ENCODE measurements at regions of chr11 and their contacts with region 1.

Region 1: DNA sequence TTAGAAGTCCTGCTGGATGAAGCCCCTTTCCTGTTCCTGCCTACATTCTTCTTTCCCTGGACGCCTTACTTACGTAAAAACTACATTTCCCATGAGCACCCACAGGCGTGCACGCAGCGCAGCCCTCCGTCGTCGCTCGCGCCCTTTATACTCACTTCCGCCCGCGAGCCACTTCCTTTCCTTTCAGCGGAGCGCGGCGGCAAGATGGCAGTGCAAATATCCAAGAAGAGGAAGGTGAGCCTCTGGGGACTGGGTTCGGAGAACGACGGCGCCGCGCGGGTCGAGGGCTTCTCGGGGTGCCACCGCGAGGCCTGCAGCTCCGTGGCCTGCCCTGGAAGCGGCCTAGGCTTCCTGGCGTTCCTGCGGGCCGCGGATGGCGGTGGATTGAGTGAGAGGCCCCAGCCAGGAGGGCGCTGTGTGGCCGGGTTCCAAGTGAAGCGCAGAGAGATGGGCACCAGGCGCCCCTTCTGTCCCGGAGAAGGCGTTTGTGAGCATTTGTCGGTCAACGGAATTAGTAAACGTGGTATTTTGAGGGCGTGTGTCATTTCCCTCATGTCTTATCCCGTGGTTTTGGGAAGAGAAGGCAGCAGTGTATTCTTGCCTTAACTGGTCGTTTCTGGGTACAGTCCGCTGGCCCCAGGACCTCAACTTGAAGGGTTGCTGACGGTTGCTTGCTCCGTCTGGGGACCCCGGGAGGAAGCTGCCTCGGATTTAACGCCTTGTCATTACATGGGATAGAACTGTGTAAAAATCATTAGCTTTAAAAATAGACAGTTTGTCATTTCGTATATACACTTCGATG is at the start of gene RPS3:
- ATAC-seq: peak; percentile 84 to 99 (median 97)
- H3K4me3 ChIP-seq: peak within 1 kb of the TSS; percentile 50 to 98 (median 90)
- H3K27ac ChIP-seq: peak within 1 kb of the TSS; percentile 87 to 96
- H3K4me1 ChIP-seq: peaks cover 16 to 20% of the 10 kb centered on the region in 2 donors
- total RNA-seq, gene RPS3: 1,093 to 3,288 (median 2,247) TPM

Region 2: DNA sequence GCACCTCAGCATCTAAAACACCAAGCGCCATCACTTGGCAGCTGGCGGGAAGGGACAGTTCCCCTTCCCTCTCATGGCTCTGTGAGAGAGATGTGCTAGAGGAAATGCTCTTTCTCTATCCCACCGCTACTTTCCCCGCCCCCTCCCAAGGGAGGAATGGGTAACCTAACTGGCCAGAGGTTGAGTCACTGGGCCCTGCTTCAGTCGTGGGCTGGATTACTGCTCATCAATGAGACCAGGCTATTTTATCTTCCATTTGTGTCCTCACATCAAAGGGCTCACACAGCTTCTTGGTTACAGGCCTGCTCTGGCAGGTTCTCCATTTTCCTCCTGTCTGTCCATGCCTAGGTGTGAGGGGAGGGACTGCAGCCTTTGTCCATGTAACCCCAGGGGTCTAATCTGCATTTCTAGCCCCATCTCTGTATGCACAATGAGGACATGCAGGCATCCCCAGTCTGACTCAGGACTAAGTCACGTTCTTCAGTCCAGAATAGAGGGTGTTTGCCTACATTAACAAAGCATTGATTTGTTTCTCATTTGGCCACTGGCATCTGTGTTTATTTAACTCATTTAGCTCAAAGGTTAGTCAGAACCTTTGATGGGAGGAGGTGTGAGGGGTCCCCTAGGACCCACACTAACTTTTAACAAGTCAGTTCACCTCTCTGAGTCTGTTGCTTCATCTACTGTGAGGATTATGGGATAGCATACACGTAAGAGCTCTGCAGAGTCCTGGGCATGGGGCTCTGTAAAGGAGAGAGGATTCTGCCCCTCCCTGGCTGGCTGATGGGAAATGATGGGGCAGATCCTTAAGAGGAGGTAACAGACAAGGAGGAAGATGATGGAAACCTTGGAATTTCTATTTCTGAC is 549.8 kb before region 1 on chr11:
- in situ Hi-C with region 1: no loop called
- ATAC-seq: peak in 7 of 8 experiments; percentile 36 to 94 (median 77)
- H3K4me3 ChIP-seq: no peak overlapping the region
- H3K27ac ChIP-seq: no peak overlapping the region
- H3K4me1 ChIP-seq: no peaks in the 10 kb centered on the region

Region 3: GRCh38 chr11:75263944-75264349 is 135.6 kb before region 1 on chr11:
- in situ Hi-C with region 1: no loop called
- ATAC-seq: peak in 4 of 8 experiments; percentile 40 to 74 (median 64)
- H3K4me3 ChIP-seq: no peak overlapping the region
- H3K27ac ChIP-seq: no peak overlapping the region
- H3K4me1 ChIP-seq: peaks cover 0 to 3% of the 10 kb centered on the region in 2 donors

Region 4: DNA sequence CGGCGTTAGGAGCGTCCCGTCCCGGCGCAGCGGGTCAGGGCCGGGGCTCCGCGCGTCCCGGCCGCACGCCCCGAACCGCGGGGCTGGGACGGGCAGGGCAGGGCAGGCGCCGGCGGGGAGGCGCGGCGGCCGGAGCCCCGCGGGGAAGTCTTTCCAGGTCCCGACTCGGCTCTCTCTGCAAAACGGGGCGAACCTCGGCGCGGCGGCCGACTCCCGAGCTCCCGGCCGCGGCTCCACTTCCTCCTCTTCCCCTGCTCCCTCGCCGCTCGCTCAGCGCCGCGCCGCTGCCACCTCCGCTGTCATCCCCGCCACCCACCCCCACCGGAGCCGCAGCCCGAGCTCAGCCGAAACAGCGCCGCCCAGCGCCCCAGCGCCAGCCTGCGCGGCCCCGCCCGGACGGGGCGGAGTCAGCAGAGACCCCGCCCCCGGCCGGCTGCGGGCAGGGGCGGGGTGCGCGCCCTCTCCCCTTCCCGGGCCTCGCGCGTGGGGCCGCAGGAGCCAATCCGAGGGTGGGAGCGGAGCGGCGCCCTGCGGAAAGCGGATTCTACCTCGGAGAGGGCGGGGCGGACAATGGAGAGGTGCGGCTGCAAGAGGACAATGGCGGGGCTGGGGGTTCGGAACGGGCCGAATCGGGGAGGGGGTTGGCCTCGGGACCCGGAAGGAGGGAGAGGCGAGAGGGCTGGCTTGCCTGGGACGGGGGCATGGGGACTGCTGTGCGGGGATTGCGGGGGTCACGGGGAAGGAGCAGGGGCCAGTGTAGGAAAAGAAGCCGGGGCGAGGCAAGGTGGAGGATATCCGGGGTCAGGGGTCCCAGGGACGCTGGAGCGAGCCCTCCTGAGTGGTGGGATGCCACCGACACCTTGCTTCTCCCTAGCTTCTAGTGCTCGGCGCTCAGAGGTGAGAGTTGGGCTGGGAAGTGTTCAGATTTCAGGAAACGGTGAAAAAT is 126.3 kb after region 1 on chr11 and contains the start of gene GDPD5:
- in situ Hi-C with region 1: loop called in 2 of 9 experiments (anchors 25 kb)
- ATAC-seq: peak; percentile 85 to 93 (median 86)
- H3K4me3 ChIP-seq: peak within 1 kb of the TSS; percentile 53 to 91 (median 75)
- H3K27ac ChIP-seq: peak within 1 kb of the TSS; percentile 27 to 28
- H3K4me1 ChIP-seq: peaks cover 11 to 12% of the 10 kb centered on the region in 2 donors
- total RNA-seq, gene GDPD5: 3.2 to 28.2 (median 16.1) TPM

Measured in motor neuron (in vitro differentiated cells).